ENCODE measurements at regions of chr5 and their contacts with region 1.

Region 1: GRCh38 chr5:61386045-61386800 is 54.2 kb downstream of the ZSWIM6 start:
- DNase-seq: no peak
- ATAC-seq: no peak
- H3K4me3 ChIP-seq: no peak overlapping the region
- H3K27ac ChIP-seq: no peak overlapping the region
- H3K4me1 ChIP-seq: peaks cover 0 to 21% (median 11%) of the 10 kb centered on the region in 9 donors
- H3K27me3 ChIP-seq: no peaks in the 10 kb centered on the region
- CTCF ChIP-seq: no peak

Region 2: DNA sequence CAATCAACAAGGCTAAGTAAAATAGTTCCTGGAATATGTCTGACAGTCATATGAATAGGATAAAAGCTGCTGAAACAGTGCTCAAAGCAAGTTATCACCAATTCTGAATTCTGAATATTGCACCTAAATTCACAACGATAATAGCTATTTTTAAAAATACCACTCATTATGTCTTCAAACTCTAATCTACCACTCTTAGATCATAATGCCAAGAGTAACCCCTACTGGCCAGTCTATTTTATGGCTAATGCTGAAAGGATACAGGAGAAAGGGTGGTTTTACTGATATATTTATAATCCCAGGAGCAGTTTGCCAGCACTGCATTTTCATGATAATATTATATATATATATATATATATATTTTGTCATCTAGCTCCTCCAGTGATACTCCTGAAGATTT is 1725.5 kb before region 1 on chr5:
- intact Hi-C with region 1: no loop called
- DNase-seq: no peak
- ATAC-seq: no peak
- H3K4me3 ChIP-seq: no peak overlapping the region
- H3K27ac ChIP-seq: no peak overlapping the region
- H3K4me1 ChIP-seq: peaks cover 0 to 17% (median 4%) of the 10 kb centered on the region in 9 donors
- H3K27me3 ChIP-seq: no peaks in the 10 kb centered on the region
- CTCF ChIP-seq: peak in 6 of 9 donors; percentile 27 to 50 (median 38)

Region 3: DNA sequence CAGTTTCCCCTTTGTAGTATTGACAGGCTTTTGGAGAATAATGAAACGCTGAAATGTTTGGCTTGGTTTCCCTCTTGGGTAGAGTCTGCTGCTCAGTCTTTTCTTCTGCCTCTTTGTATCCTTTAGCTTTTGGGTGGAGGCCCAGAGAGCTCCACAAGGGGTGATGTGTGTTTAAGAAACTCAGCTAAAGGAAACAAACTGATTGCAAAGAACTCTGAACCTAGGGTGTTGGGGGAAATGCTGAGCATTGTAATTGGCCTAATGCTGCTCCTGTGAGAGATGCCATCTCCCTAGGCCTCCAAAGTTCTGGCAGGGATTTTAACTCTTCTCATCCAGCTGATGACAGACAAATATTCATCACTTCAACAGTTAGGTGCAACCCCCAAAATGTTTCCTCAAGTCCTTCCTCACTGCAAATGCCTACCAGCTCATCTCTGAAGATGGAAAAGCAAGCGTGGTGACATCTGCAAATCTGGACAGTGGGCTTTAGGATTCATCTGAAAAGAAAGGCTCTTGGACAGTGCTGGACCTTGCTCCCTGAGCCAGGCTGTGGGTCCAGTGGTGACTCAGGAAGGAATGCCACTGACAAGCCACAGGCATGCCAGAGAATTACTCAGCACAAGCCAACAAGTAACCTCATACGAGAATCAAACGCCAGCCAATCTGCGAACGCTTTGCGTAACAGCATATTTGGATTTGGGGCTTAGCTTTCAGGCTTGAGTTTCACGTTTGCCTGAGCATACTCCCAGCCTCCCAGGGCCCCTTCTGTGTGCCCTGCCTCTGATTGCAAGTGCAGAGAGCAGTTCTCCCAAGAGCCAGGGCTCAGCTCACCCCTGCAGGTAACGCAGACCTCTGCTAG is 84.7 kb before region 1 on chr5:
- intact Hi-C with region 1: no loop called
- DNase-seq: peak in 1 of 2 donors; percentile 46
- ATAC-seq: peak; percentile 74 to 96 (median 85)
- H3K4me3 ChIP-seq: no peak overlapping the region
- H3K27ac ChIP-seq: peak overlapping the region in 6 of 10 donors; percentile 43 to 63 (median 50)
- H3K4me1 ChIP-seq: peaks cover 0 to 49% (median 13%) of the 10 kb centered on the region in 9 donors
- H3K27me3 ChIP-seq: no peaks in the 10 kb centered on the region
- CTCF ChIP-seq: no peak

Region 4: DNA sequence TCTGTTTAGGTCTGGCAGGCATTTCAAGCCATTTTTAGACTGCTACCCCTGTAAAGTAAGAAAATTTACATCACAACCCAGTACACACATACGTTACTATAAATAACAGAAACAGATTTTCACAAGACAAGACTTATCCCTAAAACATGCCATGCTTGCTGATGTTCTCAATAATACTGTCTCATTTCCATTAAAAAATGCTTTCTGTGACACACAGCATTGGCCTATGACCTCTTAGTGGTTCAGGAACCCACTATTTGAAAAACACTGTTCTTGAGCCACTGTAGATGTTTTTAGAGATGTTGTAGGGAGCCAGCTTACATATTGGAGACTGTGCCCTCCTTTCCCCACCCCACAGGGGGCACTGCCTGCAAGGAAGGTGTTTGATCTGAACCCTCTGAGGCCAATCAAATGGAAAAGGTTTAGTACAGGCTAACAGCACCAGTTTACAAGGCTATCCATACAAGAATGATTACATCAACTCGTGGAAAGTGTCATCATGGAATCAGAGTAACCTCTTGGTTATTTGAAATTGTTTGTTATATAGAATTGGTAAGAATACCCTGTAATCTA is 23.3 kb before region 1 on chr5:
- intact Hi-C with region 1: loop called in 1 of 10 experiments (anchors 1 kb)
- DNase-seq: no peak
- ATAC-seq: peak in 1 of 8 donors; percentile 19
- H3K4me3 ChIP-seq: no peak overlapping the region
- H3K27ac ChIP-seq: no peak overlapping the region
- H3K4me1 ChIP-seq: peaks cover 0 to 30% (median 8%) of the 10 kb centered on the region in 9 donors
- H3K27me3 ChIP-seq: no peaks in the 10 kb centered on the region
- CTCF ChIP-seq: peak in 2 of 9 donors; percentile 19 to 25

Region 5: DNA sequence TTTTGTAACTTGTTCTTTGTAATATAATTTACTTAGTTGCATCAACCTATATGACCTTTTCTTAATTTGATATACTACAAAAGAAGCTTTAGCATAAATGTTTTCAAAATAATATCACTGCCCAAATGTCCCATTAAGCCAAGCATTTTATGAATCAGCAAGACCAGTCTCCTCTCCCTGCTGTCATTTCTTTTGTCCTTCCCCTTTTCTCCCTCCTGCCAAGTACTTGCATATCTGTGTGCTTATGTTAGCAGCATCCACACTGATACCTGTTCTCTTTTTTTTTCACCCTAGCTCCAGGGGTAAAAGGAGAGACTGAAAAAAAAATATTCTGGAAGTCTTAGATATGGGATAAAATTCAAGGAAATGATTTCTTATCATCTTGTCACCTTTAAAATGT is 15.5 kb after region 1 on chr5:
- intact Hi-C with region 1: no loop called
- DNase-seq: peak in 1 of 2 donors; percentile 11
- ATAC-seq: peak in 5 of 8 donors; percentile 73 to 86 (median 76)
- H3K4me3 ChIP-seq: no peak overlapping the region
- H3K27ac ChIP-seq: no peak overlapping the region
- H3K4me1 ChIP-seq: peaks cover 0 to 50% (median 24%) of the 10 kb centered on the region in 9 donors
- H3K27me3 ChIP-seq: no peaks in the 10 kb centered on the region
- CTCF ChIP-seq: no peak

Region 6: DNA sequence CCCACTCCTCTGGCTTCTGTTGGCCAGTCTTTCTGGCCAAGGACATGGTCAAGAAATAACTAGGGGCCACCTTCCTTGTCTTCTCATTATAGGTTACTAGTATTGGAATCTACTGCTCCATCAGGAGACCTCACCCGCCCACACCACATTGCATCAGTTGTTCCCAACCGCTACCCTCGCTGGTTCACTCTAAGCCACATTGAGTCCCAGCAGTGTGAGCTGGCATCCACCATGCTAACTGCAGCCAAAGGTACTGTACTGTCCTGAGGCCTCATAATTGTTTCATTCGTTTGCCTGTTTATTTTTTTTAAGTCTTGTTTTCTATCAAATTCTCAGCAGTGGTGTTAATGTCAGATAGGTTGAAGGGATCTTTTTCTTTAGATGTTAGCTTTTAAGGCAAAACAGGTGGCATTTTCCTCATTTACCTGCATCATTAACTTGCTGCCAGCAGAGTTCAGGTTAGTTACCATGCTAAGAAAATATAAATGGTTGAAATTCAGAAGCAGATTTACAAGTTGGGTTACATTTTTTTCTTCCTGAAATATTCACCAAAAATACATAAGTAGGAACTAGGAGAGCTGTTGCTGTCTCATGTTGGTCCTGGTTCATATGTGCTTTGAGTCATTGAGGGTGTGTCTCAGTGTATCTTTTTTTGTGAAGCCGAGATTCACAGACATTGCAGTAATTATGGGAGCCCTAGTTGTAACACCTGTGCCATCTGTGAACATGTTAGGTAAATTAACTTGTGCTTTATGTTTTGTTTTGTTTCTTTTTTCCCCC is 152.7 kb after region 1 on chr5:
- intact Hi-C with region 1: no loop called
- DNase-seq: no peak
- ATAC-seq: no peak
- H3K4me3 ChIP-seq: no peak overlapping the region
- H3K27ac ChIP-seq: no peak overlapping the region
- H3K4me1 ChIP-seq: no peaks in the 10 kb centered on the region
- H3K27me3 ChIP-seq: no peaks in the 10 kb centered on the region
- CTCF ChIP-seq: no peak

Measured in heart right ventricle (tissue), 16 donors.